Activated CD8-positive, alpha-beta T cell treated with anti-CD3 and anti-CD28 coated beads, Interleukin-2, amount 10 ng/mL, durations not matched to agents 7 days and 5 days (primary cell): ENCODE measurements at regions of chr14 and their contacts with region 1.

Region 1: GRCh38 chr14:22099942-22100763 is 426.5 kb upstream of the OR4E1 start:
- DNase-seq: peak; percentile 78
- ATAC-seq: peak; percentile 55
- H3K4me3 Mint-ChIP-seq: no peak overlapping the region
- H3K27ac Mint-ChIP-seq: peak overlapping the region; percentile 44
- H3K4me1 Mint-ChIP-seq: peaks cover 59% of the 10 kb centered on the region
- H3K27me3 Mint-ChIP-seq: no peaks in the 10 kb centered on the region

Region 2: DNA sequence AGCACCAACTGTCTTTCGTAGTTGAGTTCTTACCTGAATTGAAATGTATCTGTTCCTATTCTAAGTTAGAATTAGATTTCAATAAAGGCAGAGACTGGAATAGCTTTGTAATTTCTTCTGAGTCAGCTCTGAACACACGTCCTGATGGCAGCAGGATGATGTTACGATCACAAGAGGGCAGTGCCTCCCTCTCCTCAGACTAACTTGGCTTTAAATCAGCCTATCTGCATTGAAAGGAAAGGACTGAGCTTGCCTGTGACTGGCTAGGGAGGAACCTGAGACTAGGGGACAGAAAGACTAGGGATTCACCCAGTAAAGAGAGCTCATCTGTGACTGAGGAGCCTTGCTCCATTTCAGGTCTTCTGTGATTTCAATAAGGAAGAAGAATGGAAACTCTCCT is 102.9 kb before region 1 on chr14:
- CTCF ChIA-PET with region 1: interaction called, 14 read pairs
- POLR2A ChIA-PET with region 1: no interaction called
- DNase-seq: peak; percentile 63
- ATAC-seq: peak; percentile 91
- H3K4me3 Mint-ChIP-seq: peak overlapping the region; percentile 87
- H3K27ac Mint-ChIP-seq: peak overlapping the region; percentile 93
- H3K4me1 Mint-ChIP-seq: peaks cover 41% of the 10 kb centered on the region
- H3K27me3 Mint-ChIP-seq: peaks cover 3% of the 10 kb centered on the region

Region 3: DNA sequence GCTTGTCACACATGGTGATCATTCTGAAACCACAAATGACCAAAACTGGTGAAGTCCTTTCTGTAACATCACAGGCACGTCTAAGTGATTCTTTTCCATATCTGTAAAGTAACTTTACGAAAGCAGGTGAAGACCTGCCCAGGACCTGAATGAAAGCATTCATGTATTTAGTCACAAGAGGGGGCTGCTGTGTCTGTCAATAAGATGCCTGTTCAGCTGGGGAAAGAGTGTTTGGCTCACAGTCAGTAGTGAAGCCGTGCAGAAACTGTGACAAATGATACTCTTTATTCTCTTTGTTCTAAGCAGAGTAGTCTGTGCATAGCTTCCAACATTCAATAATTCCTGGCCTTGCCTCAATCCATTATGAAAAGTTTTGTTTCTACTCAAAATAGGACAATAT is 53.0 kb before region 1 on chr14:
- CTCF ChIA-PET with region 1: interaction called, 49 read pairs
- POLR2A ChIA-PET with region 1: no interaction called
- DNase-seq: peak; percentile 65
- ATAC-seq: peak; percentile 94
- H3K4me3 Mint-ChIP-seq: peak overlapping the region; percentile 61
- H3K27ac Mint-ChIP-seq: peak overlapping the region; percentile 87
- H3K4me1 Mint-ChIP-seq: peaks cover 49% of the 10 kb centered on the region
- H3K27me3 Mint-ChIP-seq: peaks cover 2% of the 10 kb centered on the region

Region 4: GRCh38 chr14:22070119-22071011 is 29.8 kb before region 1 on chr14:
- CTCF ChIA-PET with region 1: interaction called, 27 read pairs
- POLR2A ChIA-PET with region 1: interaction called, 7 read pairs
- DNase-seq: peak; percentile 78
- ATAC-seq: peak; percentile 89
- H3K4me3 Mint-ChIP-seq: peak overlapping the region; percentile 94
- H3K27ac Mint-ChIP-seq: peak overlapping the region; percentile 96
- H3K4me1 Mint-ChIP-seq: peaks cover 50% of the 10 kb centered on the region
- H3K27me3 Mint-ChIP-seq: no peaks in the 10 kb centered on the region

Region 5: DNA sequence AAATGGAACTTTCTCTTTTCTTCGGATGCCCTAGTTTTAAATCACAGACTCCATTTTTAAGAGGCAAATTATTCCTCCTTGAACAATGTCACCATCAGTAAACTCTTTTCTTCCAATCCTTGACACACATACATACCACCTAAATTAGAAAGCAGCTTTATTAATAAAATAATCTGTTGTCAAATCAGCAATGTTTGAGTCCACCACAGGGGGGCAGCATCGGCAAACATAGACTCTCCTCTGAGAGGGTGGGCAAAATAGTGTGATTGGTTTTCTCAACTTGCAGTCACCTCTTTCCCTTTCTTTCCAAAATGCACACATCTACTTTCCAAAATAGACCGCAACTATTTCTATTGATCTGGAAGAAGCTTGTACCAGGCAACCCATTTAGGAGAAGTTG is 11.9 kb after region 1 on chr14:
- CTCF ChIA-PET with region 1: interaction called, 19 read pairs
- POLR2A ChIA-PET with region 1: no interaction called
- DNase-seq: peak; percentile 61
- ATAC-seq: no peak
- H3K4me3 Mint-ChIP-seq: peak overlapping the region; percentile 68
- H3K27ac Mint-ChIP-seq: peak overlapping the region; percentile 81
- H3K4me1 Mint-ChIP-seq: peaks cover 33% of the 10 kb centered on the region
- H3K27me3 Mint-ChIP-seq: no peaks in the 10 kb centered on the region

Region 6: GRCh38 chr14:22177870-22178269 is 77.7 kb after region 1 on chr14:
- CTCF ChIA-PET with region 1: no interaction called
- POLR2A ChIA-PET with region 1: no interaction called
- DNase-seq: no peak
- ATAC-seq: peak; percentile 81
- H3K4me3 Mint-ChIP-seq: peak overlapping the region; percentile 40
- H3K27ac Mint-ChIP-seq: peak overlapping the region; percentile 64
- H3K4me1 Mint-ChIP-seq: peaks cover 30% of the 10 kb centered on the region
- H3K27me3 Mint-ChIP-seq: no peaks in the 10 kb centered on the region